A549 (cell line): ENCODE measurements at regions of chr6 and their contacts with region 1.

Region 1: DNA sequence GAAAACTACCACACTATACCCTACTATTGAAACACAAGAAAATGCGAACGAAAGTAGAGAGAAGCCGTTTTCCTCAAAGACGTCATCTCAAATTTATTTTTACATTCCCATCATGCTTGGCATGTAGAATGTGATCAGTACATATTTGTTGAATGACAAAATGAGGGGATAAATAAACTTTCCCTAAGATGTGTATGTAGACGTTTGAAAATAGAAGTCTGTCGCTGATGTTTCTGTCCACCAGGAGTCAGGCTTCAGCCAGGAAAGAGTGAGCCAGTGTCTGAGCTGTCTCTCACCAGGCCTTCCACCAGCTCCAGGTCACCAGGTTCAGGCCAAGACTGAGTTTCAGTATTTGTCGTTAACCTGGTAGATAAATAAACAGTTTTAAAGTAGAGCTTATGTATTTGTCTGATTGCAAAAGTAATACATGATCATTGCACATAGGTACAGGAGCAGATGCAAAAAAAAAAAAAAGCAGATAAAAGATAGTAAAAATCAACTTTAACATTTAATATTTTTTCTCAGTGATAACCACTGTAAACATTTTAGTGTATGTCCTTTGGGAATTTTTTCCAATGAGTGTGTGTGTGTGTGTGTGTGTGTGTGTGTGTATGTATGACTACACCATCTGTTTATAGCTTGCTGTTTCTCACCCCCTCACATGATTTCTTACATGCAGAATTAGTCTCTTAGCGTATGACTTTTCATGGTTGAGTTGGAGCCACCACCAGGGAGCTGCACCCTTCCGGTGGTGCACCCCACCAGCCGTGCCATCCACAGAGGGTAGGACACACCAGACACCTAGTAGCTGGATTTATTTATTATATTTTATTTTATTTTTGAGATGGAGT is 26.2 kb downstream of the WRNIP1 start:
- DNase-seq: peak; percentile 74 to 79
- ATAC-seq: peak; percentile 91 to 95; a peak in 5 of 6 replicates
- H3K4me3 ChIP-seq: no peak overlapping the region
- H3K27ac ChIP-seq: peak overlapping the region; percentile 46 to 72
- H3K4me1 ChIP-seq: peaks cover 18% of the 10 kb centered on the region
- CTCF ChIP-seq: peak; percentile 84
- EP300 ChIP-seq: no peak
- POLR2A ChIP-seq: no peak
- RAD21 ChIP-seq: peak; percentile 88 to 90

Region 2: DNA sequence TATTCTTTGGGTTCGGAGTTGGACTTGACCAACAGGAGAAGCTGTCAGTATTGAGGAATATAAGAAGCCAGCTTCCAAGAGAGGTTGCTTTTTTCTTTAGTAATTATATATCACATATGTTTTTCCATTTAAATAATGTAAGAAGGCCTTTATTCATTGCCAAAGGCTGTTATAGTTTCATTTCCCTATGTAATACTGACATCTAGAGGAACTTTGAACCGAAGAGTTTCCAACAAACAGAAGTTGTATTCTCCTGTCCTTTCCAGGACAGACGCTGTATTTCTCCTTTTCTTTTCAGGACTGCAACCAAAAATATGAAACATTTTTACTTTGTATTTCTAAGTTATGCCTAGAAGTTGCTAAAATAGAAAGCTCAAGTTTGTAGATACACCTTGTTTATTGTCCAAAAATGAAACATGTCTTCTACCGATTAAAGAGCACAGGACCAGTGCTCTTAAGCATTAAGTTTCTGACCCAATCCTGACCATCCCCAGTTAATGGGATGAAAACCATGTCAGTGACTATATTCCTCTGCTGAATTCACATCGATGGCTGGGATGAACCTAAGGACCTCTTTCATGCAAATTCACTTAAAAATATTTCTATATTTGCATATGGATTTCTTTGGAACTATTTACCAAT is 95.8 kb before region 1 on chr6:
- CTCF ChIA-PET with region 1: no interaction called
- POLR2A ChIA-PET with region 1: no interaction called
- DNase-seq: peak in 1 of 2 experiments; percentile 10
- ATAC-seq: peak; percentile 59 to 61; a peak in 3 of 6 replicates
- H3K4me3 ChIP-seq: no peak overlapping the region
- H3K27ac ChIP-seq: no peak overlapping the region
- H3K4me1 ChIP-seq: no peaks in the 10 kb centered on the region
- CTCF ChIP-seq: peak; percentile 63
- EP300 ChIP-seq: no peak
- POLR2A ChIP-seq: no peak
- RAD21 ChIP-seq: peak; percentile 67 to 71

Region 3: DNA sequence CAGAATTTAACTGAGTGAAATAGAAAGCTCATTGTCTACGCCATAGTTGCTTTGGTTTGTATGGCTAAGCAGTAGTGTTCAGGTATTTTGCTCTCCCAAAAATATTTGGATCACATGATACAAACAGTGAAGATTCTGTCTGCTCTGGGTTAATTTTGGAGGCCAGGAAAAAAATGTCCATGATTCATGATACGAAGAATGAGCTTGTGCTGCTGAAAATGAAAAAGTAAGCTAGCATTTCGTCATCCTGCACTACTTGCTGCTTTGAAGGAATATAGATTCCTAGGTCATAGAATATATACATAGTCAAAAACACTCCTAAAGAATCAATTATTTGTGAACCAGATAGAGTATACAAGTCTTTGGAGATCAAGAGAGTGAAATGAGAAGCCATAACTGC is 17.9 kb before region 1 on chr6:
- CTCF ChIA-PET with region 1: interaction called, 24 read pairs
- POLR2A ChIA-PET with region 1: no interaction called
- DNase-seq: no peak
- ATAC-seq: no peak
- H3K4me3 ChIP-seq: no peak overlapping the region
- H3K27ac ChIP-seq: no peak overlapping the region
- H3K4me1 ChIP-seq: peaks cover 16% of the 10 kb centered on the region; the same call in 2 of the 3 replicates
- CTCF ChIP-seq: no peak
- EP300 ChIP-seq: no peak
- POLR2A ChIP-seq: no peak
- RAD21 ChIP-seq: no peak

Region 4: GRCh38 chr6:2810092-2810671 is 18.8 kb after region 1 on chr6:
- CTCF ChIA-PET with region 1: interaction called, 23 read pairs
- POLR2A ChIA-PET with region 1: no interaction called
- DNase-seq: no peak
- ATAC-seq: no peak
- H3K4me3 ChIP-seq: no peak overlapping the region
- H3K27ac ChIP-seq: no peak overlapping the region
- H3K4me1 ChIP-seq: no peaks in the 10 kb centered on the region
- CTCF ChIP-seq: no peak
- EP300 ChIP-seq: no peak
- POLR2A ChIP-seq: no peak
- RAD21 ChIP-seq: no peak

Region 5: DNA sequence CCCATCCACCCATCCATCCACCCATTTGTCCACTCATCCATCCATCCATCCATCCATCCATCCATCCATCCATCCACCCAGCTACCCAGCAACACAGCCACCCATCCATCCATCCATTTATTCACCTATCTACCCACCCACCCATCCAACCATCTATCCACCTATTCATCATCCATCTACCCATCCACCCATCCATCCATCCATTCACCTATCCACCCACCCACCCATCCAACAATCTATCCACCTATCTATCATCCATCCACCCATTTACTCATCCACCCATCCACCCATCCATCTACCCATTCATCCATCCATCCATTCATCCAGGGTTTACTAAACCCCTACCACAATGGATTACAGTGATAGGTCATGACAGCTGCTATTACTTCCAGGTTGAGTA is 42.9 kb after region 1 on chr6:
- CTCF ChIA-PET with region 1: interaction called, 73 read pairs
- POLR2A ChIA-PET with region 1: interaction called, 6 read pairs
- DNase-seq: no peak
- ATAC-seq: no peak
- H3K4me3 ChIP-seq: no peak overlapping the region
- H3K27ac ChIP-seq: no peak overlapping the region
- H3K4me1 ChIP-seq: peaks cover 28% of the 10 kb centered on the region
- CTCF ChIP-seq: no peak
- EP300 ChIP-seq: no peak
- POLR2A ChIP-seq: no peak
- RAD21 ChIP-seq: no peak

Region 6: GRCh38 chr6:2846873-2847224 is 55.5 kb after region 1 on chr6:
- CTCF ChIA-PET with region 1: interaction called, 73 read pairs
- POLR2A ChIA-PET with region 1: interaction called, 24 read pairs
- DNase-seq: no peak
- ATAC-seq: 0 out of 6 replicates have a peak, but pooled peaks of 1 of the 2 experiments have one; percentile 21
- H3K4me3 ChIP-seq: peak overlapping the region; percentile 13; the same call in 1 of the 3 replicates
- H3K27ac ChIP-seq: peak overlapping the region; percentile 81 to 94
- H3K4me1 ChIP-seq: peaks cover 39% of the 10 kb centered on the region
- CTCF ChIP-seq: no peak
- EP300 ChIP-seq: no peak
- POLR2A ChIP-seq: no peak
- RAD21 ChIP-seq: no peak

Region 7: GRCh38 chr6:2911171-2911570 is 119.8 kb after region 1 on chr6:
- CTCF ChIA-PET with region 1: interaction called, 13 read pairs
- POLR2A ChIA-PET with region 1: no interaction called
- DNase-seq: no peak
- ATAC-seq: no peak
- H3K4me3 ChIP-seq: no peak overlapping the region
- H3K27ac ChIP-seq: peak overlapping the region in 1 of 2 experiments; percentile 32; a peak in 1 of 6 replicates
- H3K4me1 ChIP-seq: peaks cover 6% of the 10 kb centered on the region; the same call in 1 of the 3 replicates
- CTCF ChIP-seq: no peak
- EP300 ChIP-seq: no peak
- POLR2A ChIP-seq: no peak
- RAD21 ChIP-seq: no peak

Region 8: GRCh38 chr6:2988426-2989331 is 197.3 kb after region 1 on chr6:
- CTCF ChIA-PET with region 1: interaction called, 21 read pairs
- POLR2A ChIA-PET with region 1: interaction called, 14 read pairs
- DNase-seq: peak; percentile 58 to 93
- ATAC-seq: peak; percentile 91
- H3K4me3 ChIP-seq: peak overlapping the region; percentile 66
- H3K27ac ChIP-seq: peak overlapping the region; percentile 96 to 99
- H3K4me1 ChIP-seq: peaks cover 33% of the 10 kb centered on the region
- CTCF ChIP-seq: peak; percentile 67
- EP300 ChIP-seq: no peak
- POLR2A ChIP-seq: peak; percentile 64
- RAD21 ChIP-seq: peak; percentile 66 to 82; a peak in 4 of 5 replicates

Region 9: DNA sequence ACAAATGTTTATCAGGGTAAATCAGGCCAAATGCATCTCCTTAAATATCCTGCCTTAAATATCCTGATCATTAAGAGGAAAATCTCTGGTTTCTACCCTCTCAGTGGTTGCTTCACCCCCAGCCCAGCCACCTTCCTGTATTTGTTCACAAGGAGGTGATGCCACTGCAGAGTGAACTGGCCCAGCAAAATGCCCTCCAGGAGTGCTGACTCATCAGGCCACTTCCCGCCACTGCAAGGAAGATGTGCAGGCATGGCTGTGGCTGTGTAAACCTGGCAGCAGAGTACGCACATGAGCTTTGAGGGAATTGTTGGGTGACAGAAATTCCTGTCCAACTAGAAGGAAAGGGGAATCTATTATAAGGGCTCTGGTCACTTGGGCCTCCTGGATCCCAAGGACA is 222.1 kb after region 1 on chr6:
- CTCF ChIA-PET with region 1: no interaction called
- POLR2A ChIA-PET with region 1: no interaction called
- DNase-seq: peak; percentile 40 to 66
- ATAC-seq: peak; percentile 72 to 78
- H3K4me3 ChIP-seq: no peak overlapping the region
- H3K27ac ChIP-seq: peak overlapping the region; percentile 62 to 85; a peak in 5 of 6 replicates
- H3K4me1 ChIP-seq: peaks cover 15% of the 10 kb centered on the region
- CTCF ChIP-seq: no peak
- EP300 ChIP-seq: no peak
- POLR2A ChIP-seq: no peak
- RAD21 ChIP-seq: no peak

Region 10: GRCh38 chr6:3194535-3195419 is 403.4 kb after region 1 on chr6:
- CTCF ChIA-PET with region 1: no interaction called
- POLR2A ChIA-PET with region 1: no interaction called
- DNase-seq: no peak
- ATAC-seq: peak in 1 of 2 experiments; percentile 18; a peak in 1 of 6 replicates
- H3K4me3 ChIP-seq: no peak overlapping the region
- H3K27ac ChIP-seq: peak overlapping the region in 1 of 2 experiments; percentile 74; a peak in 1 of 6 replicates
- H3K4me1 ChIP-seq: peaks cover 17% of the 10 kb centered on the region
- CTCF ChIP-seq: no peak
- EP300 ChIP-seq: no peak
- POLR2A ChIP-seq: no peak
- RAD21 ChIP-seq: no peak